WTC11 (cell line): ENCODE measurements at regions of chr9 and their contacts with region 1.

Region 1: GRCh38 chr9:89597711-89598625 is 6.8 kb upstream of the GADD45G start:
- DNase-seq: peak; percentile 67
- ATAC-seq: peak; percentile 30
- H3K4me3 Mint-ChIP-seq: no peak overlapping the region
- H3K27ac Mint-ChIP-seq: no peak overlapping the region
- H3K4me1 Mint-ChIP-seq: peaks cover 14% of the 10 kb centered on the region
- H3K27me3 Mint-ChIP-seq: no peaks in the 10 kb centered on the region
- CTCF ChIP-seq: peak; percentile 56

Region 2: GRCh38 chr9:89410641-89411350 is 187.2 kb before region 1 on chr9:
- CTCF ChIA-PET with region 1: interaction called, 17 read pairs
- POLR2A ChIA-PET with region 1: no interaction called
- DNase-seq: no peak
- ATAC-seq: peak; percentile 27
- H3K4me3 Mint-ChIP-seq: no peak overlapping the region
- H3K27ac Mint-ChIP-seq: peak overlapping the region; percentile 59; the same call in 1 of the 2 replicates
- H3K4me1 Mint-ChIP-seq: peaks cover 49% of the 10 kb centered on the region
- H3K27me3 Mint-ChIP-seq: no peaks in the 10 kb centered on the region; the same call in 1 of the 2 replicates
- CTCF ChIP-seq: no peak

Region 3: GRCh38 chr9:89473762-89474469 is 124.1 kb before region 1 on chr9:
- CTCF ChIA-PET with region 1: no interaction called
- POLR2A ChIA-PET with region 1: no interaction called
- DNase-seq: no peak
- ATAC-seq: no peak
- H3K4me3 Mint-ChIP-seq: no peak overlapping the region
- H3K27ac Mint-ChIP-seq: peak overlapping the region; percentile 51
- H3K4me1 Mint-ChIP-seq: peaks cover 41% of the 10 kb centered on the region
- H3K27me3 Mint-ChIP-seq: no peaks in the 10 kb centered on the region
- CTCF ChIP-seq: no peak

Region 4: GRCh38 chr9:89549031-89549644 is 48.8 kb before region 1 on chr9:
- CTCF ChIA-PET with region 1: interaction called, 25 read pairs
- POLR2A ChIA-PET with region 1: no interaction called
- DNase-seq: peak; percentile 82
- ATAC-seq: peak; percentile 73
- H3K4me3 Mint-ChIP-seq: no peak overlapping the region
- H3K27ac Mint-ChIP-seq: no peak overlapping the region
- H3K4me1 Mint-ChIP-seq: peaks cover 34% of the 10 kb centered on the region
- H3K27me3 Mint-ChIP-seq: peaks cover 3% of the 10 kb centered on the region; the same call in 1 of the 2 replicates
- CTCF ChIP-seq: peak; percentile 84

Region 5: GRCh38 chr9:89608651-89609345 is 10.8 kb after region 1 on chr9:
- CTCF ChIA-PET with region 1: interaction called, 118 read pairs
- POLR2A ChIA-PET with region 1: interaction called, 3 read pairs
- DNase-seq: no peak
- ATAC-seq: no peak
- H3K4me3 Mint-ChIP-seq: no peak overlapping the region
- H3K27ac Mint-ChIP-seq: no peak overlapping the region
- H3K4me1 Mint-ChIP-seq: peaks cover 26% of the 10 kb centered on the region
- H3K27me3 Mint-ChIP-seq: peaks cover 45% of the 10 kb centered on the region
- CTCF ChIP-seq: no peak

Region 6: DNA sequence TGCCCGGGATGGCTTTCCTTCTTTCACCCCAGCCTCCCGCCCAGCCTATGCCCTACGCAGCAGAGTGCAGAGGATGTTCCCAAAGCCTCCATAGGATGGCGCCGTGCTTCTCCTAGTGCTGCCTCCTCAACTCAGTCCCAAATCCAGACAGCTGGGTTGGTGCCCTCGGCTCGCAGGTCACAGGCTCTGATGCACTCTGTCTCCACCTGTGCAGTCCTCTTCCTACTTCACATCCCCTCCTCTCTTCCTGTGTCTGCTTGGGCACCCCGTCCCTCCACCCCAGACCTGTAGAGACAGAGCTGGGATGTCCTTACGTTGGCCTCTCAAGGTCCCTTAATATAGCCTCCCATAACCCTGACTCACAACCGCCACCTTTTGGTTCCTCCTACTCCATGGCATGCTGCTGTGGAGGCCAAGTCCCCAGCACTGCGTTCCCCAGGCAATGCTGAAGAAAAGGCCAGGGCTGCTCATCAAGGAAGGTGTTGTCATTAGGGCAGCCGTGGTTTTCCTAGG is 321.3 kb after region 1 on chr9:
- CTCF ChIA-PET with region 1: interaction called, 63 read pairs
- POLR2A ChIA-PET with region 1: no interaction called
- DNase-seq: peak; percentile 67
- ATAC-seq: peak; percentile 94
- H3K4me3 Mint-ChIP-seq: no peak overlapping the region
- H3K27ac Mint-ChIP-seq: no peak overlapping the region
- H3K4me1 Mint-ChIP-seq: peaks cover 45% of the 10 kb centered on the region
- H3K27me3 Mint-ChIP-seq: no peaks in the 10 kb centered on the region
- CTCF ChIP-seq: peak; percentile 33; the same call in 1 of the 2 replicates

Region 7: GRCh38 chr9:89999534-90000370 is 401.8 kb after region 1 on chr9:
- CTCF ChIA-PET with region 1: interaction called, 10 read pairs
- POLR2A ChIA-PET with region 1: no interaction called
- DNase-seq: no peak
- ATAC-seq: peak; percentile 27; the same call in 1 of the 2 replicates
- H3K4me3 Mint-ChIP-seq: no peak overlapping the region
- H3K27ac Mint-ChIP-seq: 0 out of 2 replicates have a peak overlapping the region, but pooled peaks have one; percentile 28
- H3K4me1 Mint-ChIP-seq: peaks cover 29% of the 10 kb centered on the region
- H3K27me3 Mint-ChIP-seq: no peaks in the 10 kb centered on the region
- CTCF ChIP-seq: no peak